ENCODE measurements at regions of chrX and their contacts with region 1.

Region 1: DNA sequence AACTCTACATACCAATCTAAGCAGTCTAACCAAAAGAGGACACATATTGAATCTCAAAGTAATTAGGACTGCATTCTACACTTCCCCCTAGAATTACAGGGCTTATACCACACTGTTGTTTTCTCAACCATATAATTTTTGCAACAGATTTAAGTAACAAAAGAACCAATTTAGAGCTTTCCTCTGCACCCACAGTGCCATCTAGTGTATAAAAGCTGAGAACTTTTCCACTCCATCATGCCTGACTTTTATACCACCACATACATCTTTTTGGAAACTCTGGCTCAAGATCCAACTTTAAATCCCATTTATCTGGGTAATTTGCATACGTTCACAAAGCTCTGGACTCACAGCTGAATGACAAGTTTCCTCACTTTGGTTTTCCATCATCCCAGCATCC is 99.5 kb downstream of the EFHC2 start:
- DNase-seq: no peak
- ATAC-seq: peak; percentile 63
- H3K4me3 ChIP-seq: no peak overlapping the region
- H3K27ac ChIP-seq: no peak overlapping the region
- H3K4me1 ChIP-seq: no peaks in the 10 kb centered on the region
- H3K27me3 ChIP-seq: peaks cover 0 to 3% of the 10 kb centered on the region in 2 experiments; a peak in 1 of 4 replicates
- CTCF ChIP-seq: peak; percentile 35 to 49 (median 45); a peak in 5 of 6 replicates
- EP300 ChIP-seq: no peak
- POLR2A ChIP-seq: no peak
- RAD21 ChIP-seq: peak; percentile 50

Region 2: GRCh38 chrX:43661521-43662240 is 582.3 kb before region 1 on chrX:
- CTCF ChIA-PET with region 1: no interaction called
- POLR2A ChIA-PET with region 1: no interaction called
- RAD21 ChIA-PET with region 1: no interaction called
- SMC1A ChIA-PET with region 1: no interaction called
- in situ Hi-C with region 1: no loop called
- intact Hi-C with region 1: no loop called
- DNase-seq: no peak
- ATAC-seq: no peak
- H3K4me3 ChIP-seq: no peak overlapping the region
- H3K27ac ChIP-seq: no peak overlapping the region
- H3K4me1 ChIP-seq: no peaks in the 10 kb centered on the region
- H3K27me3 ChIP-seq: no peaks in the 10 kb centered on the region
- CTCF ChIP-seq: no peak
- EP300 ChIP-seq: no peak
- POLR2A ChIP-seq: no peak
- RAD21 ChIP-seq: no peak

Region 3: DNA sequence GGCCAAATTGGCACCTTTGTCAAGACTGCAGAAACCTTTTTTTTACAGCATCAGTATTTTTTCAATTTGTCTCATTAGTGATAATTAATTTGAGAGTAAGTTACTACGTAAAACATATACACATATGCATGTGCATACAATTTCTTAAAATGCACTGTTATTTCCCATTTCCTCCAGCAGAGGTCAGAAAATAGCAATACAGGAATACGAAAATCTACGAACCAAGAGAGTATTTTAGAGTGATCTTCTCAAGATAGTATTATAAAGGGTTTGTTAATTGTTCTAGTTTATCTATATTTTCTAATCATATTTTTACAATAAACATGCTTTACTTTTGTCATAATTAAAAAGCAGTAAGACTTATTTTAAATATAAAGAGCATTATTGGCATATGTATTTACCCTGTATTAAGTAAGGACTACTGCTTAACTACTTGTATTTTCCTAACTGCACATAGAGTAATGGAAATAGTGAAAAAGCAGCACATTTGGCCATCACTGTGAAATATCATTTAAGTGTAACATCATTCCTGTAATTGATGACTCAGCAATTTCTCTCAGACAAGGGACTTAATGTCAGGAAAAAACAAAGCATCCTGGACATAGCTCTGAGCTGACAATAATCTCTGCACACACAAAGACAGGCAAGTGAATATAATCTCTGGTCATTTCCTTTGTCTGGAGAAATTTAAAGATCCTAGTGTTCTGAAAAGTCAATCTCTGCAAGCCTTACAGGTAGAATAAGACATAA is 407.4 kb before region 1 on chrX:
- CTCF ChIA-PET with region 1: interaction called, 22 read pairs
- POLR2A ChIA-PET with region 1: no interaction called
- RAD21 ChIA-PET with region 1: interaction called, 5 read pairs
- SMC1A ChIA-PET with region 1: interaction called, 10 read pairs
- in situ Hi-C with region 1: no loop called
- intact Hi-C with region 1: loop called (anchors 5 kb)
- DNase-seq: no peak
- ATAC-seq: peak; percentile 48; the same call in 1 of the 3 replicates
- H3K4me3 ChIP-seq: no peak overlapping the region
- H3K27ac ChIP-seq: no peak overlapping the region
- H3K4me1 ChIP-seq: no peaks in the 10 kb centered on the region
- H3K27me3 ChIP-seq: no peaks in the 10 kb centered on the region
- CTCF ChIP-seq: peak; percentile 36 to 51 (median 50); a peak in 4 of 6 replicates
- EP300 ChIP-seq: no peak
- POLR2A ChIP-seq: no peak
- RAD21 ChIP-seq: peak; percentile 54

Region 4: DNA sequence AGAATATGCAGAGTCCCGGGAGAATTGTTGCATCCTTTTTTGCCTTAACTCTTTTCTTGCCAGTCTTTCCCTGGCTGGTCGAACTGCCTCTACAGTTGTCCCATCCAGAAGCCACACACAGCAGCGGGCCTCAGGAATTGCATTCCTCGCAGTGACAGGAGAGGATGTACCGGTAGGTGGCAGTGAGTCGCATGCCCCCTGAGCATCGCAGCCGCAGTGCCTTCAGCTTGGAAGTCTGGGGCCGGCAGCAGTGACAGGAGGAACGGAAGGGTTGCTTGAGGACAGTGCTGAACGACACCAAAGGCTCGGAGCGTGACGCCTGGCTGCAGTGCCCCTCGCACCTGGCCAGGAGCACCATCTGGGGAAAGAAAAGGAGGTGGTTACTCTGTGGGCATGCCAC is 294.3 kb before region 1 on chrX:
- CTCF ChIA-PET with region 1: interaction called, 10 read pairs
- POLR2A ChIA-PET with region 1: no interaction called
- RAD21 ChIA-PET with region 1: no interaction called
- SMC1A ChIA-PET with region 1: interaction called, 3 read pairs
- in situ Hi-C with region 1: no loop called
- intact Hi-C with region 1: no loop called
- DNase-seq: no peak
- ATAC-seq: peak; percentile 62
- H3K4me3 ChIP-seq: no peak overlapping the region
- H3K27ac ChIP-seq: no peak overlapping the region
- H3K4me1 ChIP-seq: no peaks in the 10 kb centered on the region
- H3K27me3 ChIP-seq: no peaks in the 10 kb centered on the region
- CTCF ChIP-seq: peak; percentile 36 to 49 (median 36); a peak in 3 of 6 replicates
- EP300 ChIP-seq: no peak
- POLR2A ChIP-seq: no peak
- RAD21 ChIP-seq: 0 out of 2 replicates have a peak, but pooled peaks have one; percentile 8

Region 5: DNA sequence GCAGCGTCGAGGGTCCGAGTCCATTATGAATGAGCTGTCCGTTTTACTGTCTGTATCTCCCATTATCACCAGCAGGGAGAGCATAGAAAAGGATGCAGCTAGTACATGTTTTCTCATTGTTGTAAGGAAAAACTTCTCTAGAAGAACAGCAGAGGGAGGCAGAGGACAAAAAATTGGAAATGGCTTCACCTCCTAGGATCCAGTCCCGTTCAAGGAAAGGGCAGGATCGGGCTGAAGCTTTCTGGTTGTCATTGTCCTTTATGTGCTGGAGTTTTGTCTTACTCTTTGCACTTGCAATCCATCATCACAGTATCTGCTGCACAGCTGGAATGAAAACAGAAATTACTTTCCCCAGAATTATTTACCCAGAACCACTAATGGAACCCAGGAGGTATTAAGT is 285.5 kb before region 1 on chrX:
- CTCF ChIA-PET with region 1: interaction called, 31 read pairs
- POLR2A ChIA-PET with region 1: no interaction called
- RAD21 ChIA-PET with region 1: interaction called, 18 read pairs
- SMC1A ChIA-PET with region 1: interaction called, 24 read pairs
- in situ Hi-C with region 1: no loop called
- intact Hi-C with region 1: loop called (anchors 1 kb)
- DNase-seq: peak; percentile 13
- ATAC-seq: peak; percentile 87
- H3K4me3 ChIP-seq: no peak overlapping the region
- H3K27ac ChIP-seq: no peak overlapping the region
- H3K4me1 ChIP-seq: no peaks in the 10 kb centered on the region
- H3K27me3 ChIP-seq: no peaks in the 10 kb centered on the region
- CTCF ChIP-seq: peak; percentile 62 to 83 (median 68)
- EP300 ChIP-seq: no peak
- POLR2A ChIP-seq: no peak
- RAD21 ChIP-seq: peak; percentile 77

Region 6: GRCh38 chrX:43973249-43974099 is 270.5 kb before region 1 on chrX and contains the start of gene NDP:
- CTCF ChIA-PET with region 1: no interaction called
- POLR2A ChIA-PET with region 1: no interaction called
- RAD21 ChIA-PET with region 1: no interaction called
- SMC1A ChIA-PET with region 1: no interaction called
- in situ Hi-C with region 1: no loop called
- intact Hi-C with region 1: no loop called
- DNase-seq: no peak
- ATAC-seq: no peak
- H3K4me3 ChIP-seq: no peak within 1 kb of the TSS
- H3K27ac ChIP-seq: no peak within 1 kb of the TSS
- H3K4me1 ChIP-seq: no peaks in the 10 kb centered on the region
- H3K27me3 ChIP-seq: no peaks in the 10 kb centered on the region; a peak in 1 of 4 replicates
- CTCF ChIP-seq: no peak
- EP300 ChIP-seq: no peak
- POLR2A ChIP-seq: no peak
- RAD21 ChIP-seq: no peak
- polyA plus RNA-seq, gene NDP: not detected

Region 7: DNA sequence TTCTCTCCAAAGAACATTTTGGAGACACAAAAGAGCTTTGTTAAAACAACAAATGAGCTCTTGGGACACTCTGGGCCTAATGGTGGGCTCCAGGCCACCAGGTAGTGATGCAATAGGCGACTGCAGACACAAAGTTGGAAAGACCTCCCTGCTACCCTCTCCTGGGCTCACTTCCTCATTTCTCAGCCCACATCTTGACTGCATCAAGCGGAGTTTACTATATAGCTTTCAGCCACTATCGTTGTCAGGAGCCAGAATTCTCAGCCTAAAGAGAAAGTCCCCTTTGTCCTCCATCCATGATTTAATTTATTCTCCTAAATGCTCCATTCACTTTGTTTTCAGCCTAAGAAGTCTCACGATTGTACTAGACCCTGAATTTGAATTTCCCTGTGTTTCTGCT is 15.4 kb before region 1 on chrX:
- CTCF ChIA-PET with region 1: interaction called, 17 read pairs
- POLR2A ChIA-PET with region 1: no interaction called
- RAD21 ChIA-PET with region 1: interaction called, 3 read pairs
- SMC1A ChIA-PET with region 1: interaction called, 8 read pairs
- in situ Hi-C with region 1: no loop called
- intact Hi-C with region 1: no loop called
- DNase-seq: no peak
- ATAC-seq: peak; percentile 88
- H3K4me3 ChIP-seq: no peak overlapping the region
- H3K27ac ChIP-seq: no peak overlapping the region
- H3K4me1 ChIP-seq: no peaks in the 10 kb centered on the region
- H3K27me3 ChIP-seq: no peaks in the 10 kb centered on the region
- CTCF ChIP-seq: no peak
- EP300 ChIP-seq: peak in 1 of 2 experiments; percentile 21; a peak in 1 of 4 replicates
- POLR2A ChIP-seq: no peak
- RAD21 ChIP-seq: no peak

Region 8: DNA sequence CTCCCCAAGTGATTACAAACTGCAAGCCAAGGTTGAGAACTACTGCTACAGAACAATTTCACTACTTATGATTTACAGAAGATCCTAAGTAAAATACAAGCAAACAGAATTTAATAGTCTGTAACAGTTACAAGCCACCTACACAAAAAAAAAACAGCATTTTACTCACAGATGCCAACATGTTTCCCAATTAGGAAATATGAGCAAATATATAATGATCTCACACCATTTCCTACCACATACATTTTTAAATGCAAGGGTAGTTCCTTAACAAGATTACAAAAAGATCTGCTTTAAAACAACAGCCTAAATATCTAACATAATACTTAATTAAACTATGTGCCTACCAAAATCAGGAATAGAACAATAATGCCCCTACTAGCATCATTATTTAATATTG is 36.1 kb after region 1 on chrX:
- CTCF ChIA-PET with region 1: no interaction called
- POLR2A ChIA-PET with region 1: no interaction called
- RAD21 ChIA-PET with region 1: no interaction called
- SMC1A ChIA-PET with region 1: interaction called, 10 read pairs
- in situ Hi-C with region 1: no loop called
- intact Hi-C with region 1: no loop called
- DNase-seq: no peak
- ATAC-seq: no peak
- H3K4me3 ChIP-seq: no peak overlapping the region
- H3K27ac ChIP-seq: no peak overlapping the region
- H3K4me1 ChIP-seq: no peaks in the 10 kb centered on the region
- H3K27me3 ChIP-seq: no peaks in the 10 kb centered on the region
- CTCF ChIP-seq: no peak
- EP300 ChIP-seq: no peak
- POLR2A ChIP-seq: no peak
- RAD21 ChIP-seq: no peak

Region 9: GRCh38 chrX:44303119-44303518 is 59.1 kb after region 1 on chrX:
- CTCF ChIA-PET with region 1: interaction called, 10 read pairs
- POLR2A ChIA-PET with region 1: no interaction called
- RAD21 ChIA-PET with region 1: interaction called, 3 read pairs
- SMC1A ChIA-PET with region 1: interaction called, 11 read pairs
- in situ Hi-C with region 1: no loop called
- intact Hi-C with region 1: no loop called
- DNase-seq: no peak
- ATAC-seq: no peak
- H3K4me3 ChIP-seq: no peak overlapping the region
- H3K27ac ChIP-seq: no peak overlapping the region
- H3K4me1 ChIP-seq: no peaks in the 10 kb centered on the region
- H3K27me3 ChIP-seq: no peaks in the 10 kb centered on the region
- CTCF ChIP-seq: peak in 1 of 3 experiments; percentile 22; a peak in 1 of 6 replicates
- EP300 ChIP-seq: no peak
- POLR2A ChIP-seq: no peak
- RAD21 ChIP-seq: no peak

Region 10: DNA sequence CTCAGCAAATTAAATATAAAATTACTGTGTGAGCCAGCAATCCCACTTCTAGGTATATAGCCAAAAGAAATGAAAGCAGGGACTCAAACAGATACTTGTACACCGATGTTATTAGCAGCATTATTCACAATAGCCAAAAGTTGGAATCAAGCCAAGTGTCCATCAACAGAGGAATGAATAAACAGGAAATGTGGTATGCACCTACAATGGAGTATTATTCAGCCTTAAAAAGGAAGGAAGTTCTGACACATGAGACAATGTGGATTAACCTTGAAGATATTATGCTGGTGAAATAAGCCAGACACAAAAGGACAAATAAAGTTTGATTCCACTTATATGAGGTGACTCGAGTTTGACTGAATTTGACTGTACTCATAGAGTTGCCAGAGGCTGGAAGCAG is 491.5 kb after region 1 on chrX:
- CTCF ChIA-PET with region 1: no interaction called
- POLR2A ChIA-PET with region 1: no interaction called
- RAD21 ChIA-PET with region 1: no interaction called
- SMC1A ChIA-PET with region 1: no interaction called
- in situ Hi-C with region 1: no loop called
- intact Hi-C with region 1: no loop called
- DNase-seq: no peak
- ATAC-seq: no peak
- H3K4me3 ChIP-seq: no peak overlapping the region
- H3K27ac ChIP-seq: no peak overlapping the region
- H3K4me1 ChIP-seq: no peaks in the 10 kb centered on the region
- H3K27me3 ChIP-seq: peaks cover 0 to 2% of the 10 kb centered on the region in 2 experiments; a peak in 1 of 4 replicates
- CTCF ChIP-seq: no peak
- EP300 ChIP-seq: no peak
- POLR2A ChIP-seq: no peak
- RAD21 ChIP-seq: no peak